HCT116 (cell line): ENCODE measurements at regions of chr1 and their contacts with region 1.

Region 1: GRCh38 chr1:205977402-205978014 is 25.7 kb downstream of the RAB7B start:
- DNase-seq: peak; percentile 68
- ATAC-seq: peak; percentile 94
- H3K4me3 ChIP-seq: no peak overlapping the region
- H3K27ac ChIP-seq: no peak overlapping the region
- H3K4me1 ChIP-seq: peaks cover 6 to 10% of the 10 kb centered on the region in 2 experiments; a peak in 3 of 4 replicates
- H3K27me3 ChIP-seq: no peaks in the 10 kb centered on the region
- CTCF ChIP-seq: peak; percentile 96 to 98 (median 97)
- POLR2A ChIP-seq: no peak
- RAD21 ChIP-seq: peak; percentile 98

Region 2: DNA sequence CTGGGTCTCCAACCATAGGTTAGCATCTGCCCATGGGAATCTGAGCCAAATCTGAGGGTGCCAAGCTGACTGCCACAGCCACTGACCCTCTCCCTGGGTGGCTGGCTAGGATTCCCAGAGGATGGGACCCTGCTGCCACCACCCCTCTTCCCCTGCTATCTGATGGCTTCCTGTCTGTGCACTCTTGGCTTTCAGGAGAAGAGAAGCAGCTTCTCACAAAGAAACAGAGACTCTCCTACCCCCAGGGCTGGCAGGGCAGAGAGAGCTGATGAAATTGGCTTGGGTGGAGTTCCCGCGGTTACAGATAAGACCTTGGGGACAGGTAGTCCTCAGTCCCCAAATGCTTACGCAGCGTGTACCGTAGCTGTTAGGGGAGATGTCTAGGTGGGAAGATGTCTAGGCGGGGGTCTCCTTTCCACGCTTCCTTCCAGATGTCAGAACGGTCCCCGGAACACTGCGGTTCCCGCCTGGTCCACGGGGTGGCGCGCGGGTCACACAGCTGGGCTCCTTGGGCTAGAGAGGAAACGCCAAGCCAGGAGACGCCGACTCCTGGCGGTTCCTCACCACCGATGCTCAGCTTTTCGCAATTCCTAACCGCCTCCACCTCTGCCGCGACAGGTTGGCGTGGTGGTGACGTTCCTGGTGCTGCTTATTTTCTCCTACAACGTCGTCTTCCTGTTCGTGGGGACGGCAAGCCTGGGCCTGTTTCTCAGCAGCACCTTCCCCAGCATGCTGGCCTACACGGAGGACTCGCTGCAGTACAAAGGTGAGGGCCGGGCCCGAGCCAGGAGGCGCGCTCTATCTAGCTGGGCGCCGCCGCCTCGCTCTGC is 385.8 kb before region 1 on chr1:
- CTCF ChIA-PET with region 1: interaction called, 12 read pairs
- POLR2A ChIA-PET with region 1: no interaction called
- RAD21 ChIA-PET with region 1: interaction called in 1 of 2 experiments, 5 read pairs
- intact Hi-C with region 1: loop called (anchors 5 kb)
- DNase-seq: peak; percentile 65
- ATAC-seq: peak; percentile 89
- H3K4me3 ChIP-seq: peak overlapping the region; percentile 37 to 53
- H3K27ac ChIP-seq: peak overlapping the region; percentile 14; the same call in 1 of the 2 replicates
- H3K4me1 ChIP-seq: peaks cover 0 to 11% of the 10 kb centered on the region in 2 experiments; a peak in 2 of 4 replicates
- H3K27me3 ChIP-seq: no peaks in the 10 kb centered on the region
- CTCF ChIP-seq: peak; percentile 97 to 98 (median 98)
- POLR2A ChIP-seq: no peak
- RAD21 ChIP-seq: peak; percentile 99

Region 3: GRCh38 chr1:205791568-205792180 is 185.8 kb before region 1 on chr1:
- CTCF ChIA-PET with region 1: interaction called, 128 read pairs
- POLR2A ChIA-PET with region 1: no interaction called
- RAD21 ChIA-PET with region 1: interaction called, 22 to 24 read pairs
- intact Hi-C with region 1: loop called (anchors 1 kb)
- DNase-seq: no peak
- ATAC-seq: peak; percentile 100
- H3K4me3 ChIP-seq: no peak overlapping the region
- H3K27ac ChIP-seq: no peak overlapping the region
- H3K4me1 ChIP-seq: no peaks in the 10 kb centered on the region
- H3K27me3 ChIP-seq: no peaks in the 10 kb centered on the region
- CTCF ChIP-seq: peak; percentile 78 to 83 (median 78)
- POLR2A ChIP-seq: no peak
- RAD21 ChIP-seq: peak; percentile 91

Region 4: GRCh38 chr1:205878026-205878425 is 99.5 kb before region 1 on chr1:
- CTCF ChIA-PET with region 1: no interaction called
- POLR2A ChIA-PET with region 1: no interaction called
- RAD21 ChIA-PET with region 1: no interaction called
- intact Hi-C with region 1: no loop called
- DNase-seq: no peak
- ATAC-seq: no peak
- H3K4me3 ChIP-seq: no peak overlapping the region
- H3K27ac ChIP-seq: no peak overlapping the region
- H3K4me1 ChIP-seq: no peaks in the 10 kb centered on the region
- H3K27me3 ChIP-seq: no peaks in the 10 kb centered on the region
- CTCF ChIP-seq: no peak
- POLR2A ChIP-seq: no peak
- RAD21 ChIP-seq: no peak

Region 5: DNA sequence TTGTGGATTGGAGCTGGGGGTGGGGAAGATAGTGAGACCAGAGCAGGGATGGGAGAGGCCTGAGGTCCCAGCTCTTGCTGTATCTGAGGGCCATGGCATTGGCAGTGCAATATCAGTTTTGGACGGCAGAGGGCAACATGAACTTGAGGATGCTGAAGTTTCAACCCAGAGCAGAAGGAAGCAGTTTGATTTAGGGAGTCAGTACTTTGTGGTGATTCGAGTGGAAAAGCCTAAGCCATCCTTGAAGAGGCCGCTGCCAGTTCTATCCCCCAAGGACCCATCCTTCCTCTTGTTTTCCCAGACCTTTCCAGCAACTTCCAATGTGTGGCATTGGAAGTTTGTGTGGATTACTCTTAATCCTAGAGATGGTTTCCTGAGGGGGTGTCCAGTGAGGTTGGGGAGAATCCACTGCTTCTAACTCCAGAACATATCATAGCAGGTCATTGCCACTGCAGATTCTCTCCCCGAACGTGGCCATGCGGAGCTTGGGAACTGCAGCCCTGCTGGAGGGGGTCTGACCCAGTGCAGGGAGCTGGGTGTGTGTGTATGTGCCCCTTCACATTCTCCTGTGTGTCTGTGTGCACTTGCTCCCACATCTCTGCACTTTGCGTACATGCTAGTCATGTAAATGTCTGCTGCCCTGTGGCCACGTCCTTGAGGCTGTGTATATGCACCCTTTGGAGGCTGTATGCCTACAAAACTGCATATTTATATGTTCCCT is 58.3 kb before region 1 on chr1:
- CTCF ChIA-PET with region 1: interaction called, 339 read pairs
- POLR2A ChIA-PET with region 1: interaction called, 17 read pairs
- RAD21 ChIA-PET with region 1: interaction called, 67 to 75 read pairs
- intact Hi-C with region 1: loop called (anchors 1 kb)
- DNase-seq: peak; percentile 74
- ATAC-seq: peak; percentile 96
- H3K4me3 ChIP-seq: no peak overlapping the region
- H3K27ac ChIP-seq: no peak overlapping the region
- H3K4me1 ChIP-seq: no peaks in the 10 kb centered on the region
- H3K27me3 ChIP-seq: no peaks in the 10 kb centered on the region
- CTCF ChIP-seq: peak; percentile 86 to 94 (median 89)
- POLR2A ChIP-seq: no peak
- RAD21 ChIP-seq: peak; percentile 98

Region 6: GRCh38 chr1:205936846-205937707 is 40.4 kb before region 1 on chr1:
- CTCF ChIA-PET with region 1: no interaction called
- POLR2A ChIA-PET with region 1: no interaction called
- RAD21 ChIA-PET with region 1: no interaction called
- intact Hi-C with region 1: no loop called
- DNase-seq: no peak
- ATAC-seq: peak; percentile 38; the same call in 1 of the 2 replicates
- H3K4me3 ChIP-seq: no peak overlapping the region
- H3K27ac ChIP-seq: no peak overlapping the region
- H3K4me1 ChIP-seq: peaks cover 12 to 37% of the 10 kb centered on the region in 2 experiments
- H3K27me3 ChIP-seq: no peaks in the 10 kb centered on the region
- CTCF ChIP-seq: no peak
- POLR2A ChIP-seq: no peak
- RAD21 ChIP-seq: no peak

Region 7: GRCh38 chr1:206106328-206107167 is 129.0 kb after region 1 on chr1:
- CTCF ChIA-PET with region 1: interaction called, 23 read pairs
- POLR2A ChIA-PET with region 1: no interaction called
- RAD21 ChIA-PET with region 1: interaction called, 6 to 8 read pairs
- intact Hi-C with region 1: no loop called
- DNase-seq: peak; percentile 56
- ATAC-seq: peak; percentile 98
- H3K4me3 ChIP-seq: no peak overlapping the region
- H3K27ac ChIP-seq: no peak overlapping the region
- H3K4me1 ChIP-seq: no peaks in the 10 kb centered on the region
- H3K27me3 ChIP-seq: no peaks in the 10 kb centered on the region; the same call in 1 of the 2 replicates
- CTCF ChIP-seq: peak; percentile 82 to 95 (median 85)
- POLR2A ChIP-seq: no peak
- RAD21 ChIP-seq: peak; percentile 94